PC-9 (cell line): ENCODE measurements at regions of chr19 and their contacts with region 1.

Region 1: GRCh38 chr19:35031072-35031881 is 1.0 kb downstream of the SCN1B start:
- DNase-seq: peak in 1 of 2 experiments; percentile 35
- H3K4me3 ChIP-seq: peak overlapping the region; percentile 46; the same call in 1 of the 2 replicates
- H3K27ac ChIP-seq: no peak overlapping the region
- H3K4me1 ChIP-seq: peaks cover 12% of the 10 kb centered on the region; the same call in 1 of the 2 replicates
- H3K27me3 ChIP-seq: peaks cover 21% of the 10 kb centered on the region
- CTCF ChIP-seq: no peak

Region 2: DNA sequence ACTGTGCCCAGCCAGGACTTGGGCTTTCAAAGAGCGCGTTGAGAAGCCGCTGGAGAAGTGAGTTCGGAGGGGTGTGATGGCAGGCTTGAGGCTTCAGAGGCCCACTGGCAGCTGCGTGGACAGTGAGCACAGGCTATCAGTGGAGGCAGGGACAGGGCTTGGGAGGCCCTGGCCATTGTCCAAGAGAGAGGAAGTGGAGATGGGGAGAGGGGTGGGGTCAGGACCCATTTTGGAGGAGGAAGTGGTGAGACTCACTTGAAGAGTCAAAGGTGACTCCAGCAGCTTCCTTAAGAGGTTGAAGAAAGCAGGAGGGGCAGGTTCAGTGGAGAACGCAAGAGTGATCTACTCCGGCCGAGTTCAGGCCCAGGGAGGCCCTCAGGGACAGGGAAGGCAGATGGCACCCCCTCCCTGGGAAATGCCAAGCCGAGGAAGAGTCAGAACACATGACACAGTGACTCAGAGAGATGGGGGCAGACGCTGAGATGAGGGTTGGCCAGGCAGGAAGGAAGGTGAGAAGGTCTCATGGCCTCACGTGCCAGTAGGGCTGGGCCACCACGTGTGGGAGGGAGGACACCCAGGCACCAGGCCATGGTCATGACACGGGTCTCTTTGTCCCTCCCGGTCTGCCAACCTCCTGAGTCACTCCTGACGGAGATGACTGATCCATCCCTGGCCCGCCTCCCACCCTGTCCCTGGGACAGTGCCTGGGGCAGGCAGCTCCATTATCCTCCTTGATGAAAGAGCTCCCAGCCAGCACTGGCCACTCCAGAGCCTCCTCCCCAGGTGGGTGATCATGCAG is 287.6 kb after region 1 on chr19:
- CTCF ChIA-PET with region 1: no interaction called
- POLR2A ChIA-PET with region 1: interaction called, 10 read pairs
- intact Hi-C with region 1: no loop called
- DNase-seq: peak; percentile 98 to 99
- H3K4me3 ChIP-seq: peak overlapping the region; percentile 11; the same call in 1 of the 2 replicates
- H3K27ac ChIP-seq: peak overlapping the region; percentile 98
- H3K4me1 ChIP-seq: peaks cover 63% of the 10 kb centered on the region
- H3K27me3 ChIP-seq: no peaks in the 10 kb centered on the region
- CTCF ChIP-seq: no peak